ENCODE measurements at regions of chr9 and their contacts with region 1.

Region 1: GRCh38 chr9:27569406-27569805 is 3.9 kb downstream of the C9orf72 start:
- DNase-seq: peak; percentile 86
- ATAC-seq: peak; percentile 28
- H3K4me3 ChIP-seq: no peak overlapping the region
- H3K27ac ChIP-seq: no peak overlapping the region
- H3K4me1 ChIP-seq: peaks cover 75% of the 10 kb centered on the region
- H3K27me3 ChIP-seq: no peaks in the 10 kb centered on the region; a peak in 1 of 5 replicates
- CTCF ChIP-seq: no peak
- EP300 ChIP-seq: peak in 1 of 2 experiments; percentile 51; a peak in 1 of 4 replicates
- POLR2A ChIP-seq: no peak
- RAD21 ChIP-seq: no peak

Region 2: GRCh38 chr9:27436234-27436633 is 133.2 kb before region 1 on chr9:
- CTCF ChIA-PET with region 1: no interaction called
- POLR2A ChIA-PET with region 1: no interaction called
- in situ Hi-C with region 1: no loop called
- intact Hi-C with region 1: loop called (anchors 1 kb)
- DNase-seq: peak; percentile 95
- ATAC-seq: peak; percentile 99
- H3K4me3 ChIP-seq: no peak overlapping the region
- H3K27ac ChIP-seq: no peak overlapping the region
- H3K4me1 ChIP-seq: peaks cover 9% of the 10 kb centered on the region
- H3K27me3 ChIP-seq: peaks cover 3 to 49% of the 10 kb centered on the region in 2 experiments; a peak in 4 of 5 replicates
- CTCF ChIP-seq: no peak
- EP300 ChIP-seq: peak in 1 of 2 experiments; percentile 72; a peak in 2 of 4 replicates
- POLR2A ChIP-seq: no peak
- RAD21 ChIP-seq: no peak

Measured in HepG2 (cell line).